ENCODE measurements at regions of chr4 and their contacts with region 1.

Region 1: DNA sequence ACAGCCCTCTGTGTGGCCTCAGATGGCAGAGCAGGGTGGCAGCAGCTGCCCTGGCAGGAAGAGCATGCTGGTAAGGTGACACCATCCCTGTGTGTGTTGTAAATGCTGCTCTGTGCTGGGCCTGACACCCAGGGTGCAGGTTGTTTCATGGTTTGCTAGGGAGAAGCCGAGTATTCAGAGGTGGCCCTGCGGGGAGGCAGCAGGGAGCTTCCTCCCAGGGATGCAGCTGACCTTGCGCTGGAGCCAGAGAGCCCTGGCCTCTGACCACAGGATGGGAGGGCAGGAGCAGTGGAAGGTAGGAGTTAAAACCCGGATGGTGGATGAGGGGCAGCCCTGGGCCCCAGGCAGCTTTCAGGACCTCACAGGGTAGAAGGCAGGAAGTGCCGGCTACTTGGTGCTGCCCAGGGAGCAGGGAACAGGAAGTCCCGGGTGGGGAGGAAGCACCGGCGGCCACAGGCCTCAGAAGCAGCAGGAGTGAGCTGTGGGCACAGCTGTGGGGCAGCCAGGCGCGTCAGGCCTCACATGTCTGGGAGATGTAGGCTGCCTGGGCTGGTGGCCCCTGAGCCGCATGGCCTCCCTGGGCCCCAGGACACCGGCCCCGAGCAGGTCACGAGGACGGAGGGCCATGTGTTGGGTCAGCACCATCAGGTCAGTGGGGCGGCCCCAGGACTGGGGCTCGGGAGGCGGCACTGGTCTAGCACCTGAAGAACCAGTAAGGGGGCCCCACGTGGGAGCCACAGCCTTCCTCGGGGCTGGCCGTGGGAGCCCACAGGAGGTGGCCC is 19.1 kb downstream of the SH3BP2 start:
- DNase-seq: peak; percentile 81
- H3K4me3 Mint-ChIP-seq: peak overlapping the region; percentile 79
- H3K27ac Mint-ChIP-seq: peak overlapping the region; percentile 95
- H3K4me1 Mint-ChIP-seq: peaks cover 48% of the 10 kb centered on the region
- H3K27me3 Mint-ChIP-seq: no peaks in the 10 kb centered on the region

Region 2: GRCh38 chr4:2761035-2761923 is 50.7 kb before region 1 on chr4:
- CTCF ChIA-PET with region 1: interaction called, 9 read pairs
- POLR2A ChIA-PET with region 1: interaction called, 5 read pairs
- intact Hi-C with region 1: loop called (anchors 2 kb)
- DNase-seq: peak; percentile 51
- H3K4me3 Mint-ChIP-seq: no peak overlapping the region
- H3K27ac Mint-ChIP-seq: no peak overlapping the region
- H3K4me1 Mint-ChIP-seq: peaks cover 9% of the 10 kb centered on the region
- H3K27me3 Mint-ChIP-seq: no peaks in the 10 kb centered on the region

Measured in activated CD4-positive, alpha-beta memory T cell treated with anti-CD3 and anti-CD28 coated beads for 36 hours (primary cell).